Calu3 (cell line): ENCODE measurements at regions of chr13 and their contacts with region 1.

Region 1: DNA sequence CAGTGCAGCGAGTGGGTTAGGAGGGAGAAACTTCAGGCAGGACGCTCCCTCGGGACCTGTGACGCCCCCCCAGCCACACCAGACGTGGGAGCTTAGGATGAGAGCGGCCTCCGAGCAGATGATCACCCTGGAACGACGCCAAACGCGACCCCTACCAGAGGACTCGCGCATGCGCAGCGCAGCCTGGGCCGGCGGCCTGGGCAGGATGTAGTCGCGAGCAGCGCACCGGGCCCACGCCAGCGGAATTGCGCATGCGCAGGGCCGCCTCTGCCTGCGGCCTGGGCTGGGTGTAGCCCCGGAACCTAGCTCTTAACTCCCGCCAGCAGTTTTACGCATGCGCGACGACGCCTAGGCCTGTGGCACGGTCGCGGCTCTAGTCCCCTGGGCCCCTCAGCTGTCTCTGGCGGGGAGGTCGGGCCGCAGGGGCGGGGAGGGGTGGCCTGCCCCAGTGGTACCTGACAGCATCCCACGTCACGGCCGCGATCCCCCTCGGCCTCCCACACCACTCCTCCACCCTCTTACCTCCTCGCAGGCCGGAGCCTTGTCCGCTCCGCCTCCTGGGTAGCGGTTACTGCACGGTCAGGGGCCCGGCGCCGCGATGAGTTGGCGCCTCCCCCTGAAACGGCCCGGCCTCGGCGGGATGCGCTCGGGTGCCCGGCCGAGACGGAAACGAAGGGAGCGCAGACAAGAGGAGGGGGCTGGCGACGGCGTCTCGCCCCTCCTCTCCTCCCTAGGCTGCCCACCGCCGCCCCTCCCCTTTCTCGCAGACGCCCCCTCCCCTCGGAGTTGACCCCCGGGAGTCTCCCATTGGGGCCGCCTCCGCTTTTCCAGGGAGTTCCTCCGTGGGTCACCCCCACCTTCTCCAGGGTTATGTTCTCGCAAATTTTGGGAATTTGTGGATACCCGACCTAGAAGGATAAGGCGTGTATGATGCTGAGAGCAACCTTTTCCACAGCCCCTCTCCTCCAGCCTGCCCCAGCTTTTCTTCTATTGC is at the start of gene RCBTB2:
- DNase-seq: peak; percentile 96
- H3K4me3 Mint-ChIP-seq: peak within 1 kb of the TSS; percentile 77
- H3K27ac Mint-ChIP-seq: peak within 1 kb of the TSS; percentile 72
- H3K4me1 Mint-ChIP-seq: peaks cover 12% of the 10 kb centered on the region
- H3K27me3 Mint-ChIP-seq: no peaks in the 10 kb centered on the region
- CTCF ChIP-seq: no peak
- total RNA-seq, gene RCBTB2: 3.0 and 3.7 TPM in 2 replicates

Region 2: GRCh38 chr13:48585456-48585840 is 52.6 kb after region 1 on chr13:
- CTCF ChIA-PET with region 1: interaction called, 3 read pairs
- intact Hi-C with region 1: loop called (anchors 2 kb)
- DNase-seq: peak; percentile 57
- H3K4me3 Mint-ChIP-seq: no peak overlapping the region
- H3K27ac Mint-ChIP-seq: peak overlapping the region; percentile 58
- H3K4me1 Mint-ChIP-seq: peaks cover 67% of the 10 kb centered on the region
- H3K27me3 Mint-ChIP-seq: no peaks in the 10 kb centered on the region
- CTCF ChIP-seq: no peak